ENCODE measurements at regions of chr7 and their contacts with region 1.

Region 1: GRCh38 chr7:64045301-64046040 is at the start of gene ZNF727:
- DNase-seq: no peak
- H3K4me3 ChIP-seq: no peak within 1 kb of the TSS
- H3K27ac ChIP-seq: no peak within 1 kb of the TSS
- H3K4me1 ChIP-seq: no peaks in the 10 kb centered on the region
- CTCF ChIP-seq: no peak
- total RNA-seq, gene ZNF727: not detected in 2 replicates

Region 2: DNA sequence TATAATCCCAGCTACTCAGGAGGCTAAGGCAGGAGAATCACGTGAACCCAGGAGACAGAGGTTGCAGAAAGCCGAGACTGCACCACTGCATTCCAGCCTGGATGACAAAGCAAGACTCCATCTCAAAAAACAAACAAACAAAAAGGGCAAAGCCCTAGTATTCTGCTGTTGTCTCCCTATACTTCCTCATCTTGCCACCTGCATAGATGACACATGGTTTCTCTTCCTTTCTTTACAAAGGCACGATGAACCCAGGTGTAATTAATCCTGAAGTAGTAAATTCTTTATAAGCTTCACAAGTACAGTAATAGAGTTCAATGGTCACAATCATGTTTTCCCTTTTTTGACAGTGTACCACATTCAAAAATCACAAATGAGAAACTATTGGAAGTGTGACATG is 10.1 kb before region 1 on chr7:
- CTCF ChIA-PET with region 1: no interaction called
- POLR2A ChIA-PET with region 1: no interaction called
- intact Hi-C with region 1: no loop called
- DNase-seq: no peak
- H3K4me3 ChIP-seq: no peak overlapping the region
- H3K27ac ChIP-seq: no peak overlapping the region
- H3K4me1 ChIP-seq: no peaks in the 10 kb centered on the region
- CTCF ChIP-seq: no peak

Region 3: GRCh38 chr7:64625114-64626082 is 579.9 kb after region 1 on chr7:
- CTCF ChIA-PET with region 1: no interaction called
- POLR2A ChIA-PET with region 1: no interaction called
- intact Hi-C with region 1: loop called (anchors 5 kb)
- DNase-seq: peak; percentile 61
- H3K4me3 ChIP-seq: no peak overlapping the region
- H3K27ac ChIP-seq: no peak overlapping the region
- H3K4me1 ChIP-seq: peaks cover 8% of the 10 kb centered on the region
- CTCF ChIP-seq: peak; percentile 97